Left cardiac atrium (tissue), 4 donors: ENCODE measurements at regions of chr10 and their contacts with region 1.

Region 1: GRCh38 chr10:101889256-101890210 is 45.9 kb upstream of the KCNIP2 start:
- DNase-seq: peak; percentile 83
- ATAC-seq: peak in 1 of 2 donors; percentile 43

Region 2: DNA sequence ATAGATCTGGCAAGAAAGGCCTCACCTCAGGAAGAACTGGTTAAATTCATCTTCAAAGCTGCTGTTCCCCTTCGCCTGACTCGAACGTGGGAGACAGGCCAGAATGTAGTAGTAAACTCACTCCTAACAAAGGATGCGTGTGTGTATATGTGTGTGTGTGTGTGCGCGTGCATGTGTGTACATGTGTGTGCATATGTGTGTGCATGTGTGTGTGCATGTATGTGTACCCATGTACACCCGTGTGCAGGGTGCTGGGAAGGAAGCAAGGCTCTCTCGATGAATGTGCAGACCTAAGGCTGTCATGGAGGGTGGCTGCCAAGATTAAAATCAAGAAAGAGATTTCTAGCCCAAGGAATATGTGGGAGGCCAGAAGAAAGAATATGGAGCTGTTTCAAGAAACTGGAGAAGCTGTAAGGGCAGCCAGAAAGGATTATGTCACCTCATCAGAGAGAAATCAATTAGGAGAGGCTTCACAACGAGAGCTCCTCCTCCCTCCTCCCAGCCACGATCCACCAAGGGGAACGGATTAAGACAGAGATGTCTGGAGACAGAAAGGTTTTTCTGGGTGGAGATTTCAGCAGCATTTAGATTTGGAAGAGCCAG is 626.3 kb before region 1 on chr10:
- intact Hi-C with region 1: no loop called
- DNase-seq: no peak
- ATAC-seq: peak in 1 of 2 donors; percentile 19

Region 3: GRCh38 chr10:101961591-101962498 is 72.3 kb after region 1 on chr10:
- intact Hi-C with region 1: loop called in 1 of 2 experiments (anchors 2 kb)
- DNase-seq: peak; percentile 56
- ATAC-seq: peak; percentile 81 to 91

Region 4: DNA sequence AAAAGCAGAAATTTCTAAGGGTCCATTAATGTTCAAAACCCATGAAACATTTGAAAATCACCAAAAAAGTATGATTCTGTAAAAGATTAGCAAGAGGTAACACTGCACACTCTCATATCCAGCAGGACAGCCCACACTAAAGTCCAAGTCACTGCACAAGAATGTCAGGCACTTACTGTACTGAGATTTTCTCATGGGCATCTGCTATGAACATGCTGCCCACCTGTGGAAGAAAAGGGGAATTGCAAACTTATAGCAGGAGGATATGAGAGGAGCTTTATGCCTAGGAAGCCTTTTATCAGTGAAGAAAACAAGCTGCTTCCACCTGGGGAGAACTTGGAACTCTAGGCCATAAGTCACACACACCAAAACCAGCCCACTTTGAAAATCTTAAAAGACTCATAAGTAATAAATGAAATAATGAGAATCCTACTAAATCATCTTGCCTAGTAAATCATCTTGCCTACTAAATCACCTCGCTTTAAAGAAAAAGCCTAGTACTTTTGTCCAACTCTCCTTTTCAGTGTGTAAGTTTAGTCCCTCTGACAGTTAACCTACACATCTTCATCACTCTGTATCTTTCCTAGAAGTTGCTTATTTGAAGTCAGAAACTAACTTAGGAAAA is 120.4 kb after region 1 on chr10:
- intact Hi-C with region 1: loop called (anchors 5 kb)
- DNase-seq: peak; percentile 26
- ATAC-seq: peak; percentile 93 to 96